ENCODE measurements at regions of chr2 and their contacts with region 1.

Region 1: GRCh38 chr2:39059366-39059952 is 61.4 kb downstream of the SOS1 start:
- DNase-seq: no peak
- ATAC-seq: no peak

Region 2: DNA sequence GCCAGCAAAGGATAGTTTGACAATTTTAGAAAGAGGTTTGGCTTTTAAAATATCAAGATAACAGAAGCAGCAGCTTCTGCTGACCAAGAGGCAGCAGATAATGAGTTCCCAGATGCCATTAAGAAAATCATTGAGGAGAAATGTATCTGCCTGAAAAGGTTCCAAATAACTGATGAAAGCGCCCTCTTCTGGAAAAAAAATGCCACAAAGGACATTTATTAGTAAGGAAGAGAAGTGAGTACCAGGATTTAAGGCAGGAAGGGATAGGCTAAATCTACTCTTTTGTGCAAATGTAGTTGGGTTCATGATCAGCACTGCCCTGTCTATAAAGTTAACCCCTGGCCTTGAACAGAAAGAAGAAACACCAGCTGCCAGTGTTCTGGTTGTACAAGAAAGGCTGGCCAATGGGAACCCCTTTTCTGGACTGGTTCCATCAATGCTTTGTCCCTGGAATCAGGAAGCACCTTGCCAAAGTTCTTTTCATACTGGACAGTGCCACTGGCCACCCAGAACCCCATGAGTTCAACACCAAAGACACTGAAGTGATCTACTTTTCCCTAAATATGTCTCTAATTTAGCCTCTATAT is 224.4 kb before region 1 on chr2:
- intact Hi-C with region 1: no loop called
- DNase-seq: no peak
- ATAC-seq: no peak

Region 3: DNA sequence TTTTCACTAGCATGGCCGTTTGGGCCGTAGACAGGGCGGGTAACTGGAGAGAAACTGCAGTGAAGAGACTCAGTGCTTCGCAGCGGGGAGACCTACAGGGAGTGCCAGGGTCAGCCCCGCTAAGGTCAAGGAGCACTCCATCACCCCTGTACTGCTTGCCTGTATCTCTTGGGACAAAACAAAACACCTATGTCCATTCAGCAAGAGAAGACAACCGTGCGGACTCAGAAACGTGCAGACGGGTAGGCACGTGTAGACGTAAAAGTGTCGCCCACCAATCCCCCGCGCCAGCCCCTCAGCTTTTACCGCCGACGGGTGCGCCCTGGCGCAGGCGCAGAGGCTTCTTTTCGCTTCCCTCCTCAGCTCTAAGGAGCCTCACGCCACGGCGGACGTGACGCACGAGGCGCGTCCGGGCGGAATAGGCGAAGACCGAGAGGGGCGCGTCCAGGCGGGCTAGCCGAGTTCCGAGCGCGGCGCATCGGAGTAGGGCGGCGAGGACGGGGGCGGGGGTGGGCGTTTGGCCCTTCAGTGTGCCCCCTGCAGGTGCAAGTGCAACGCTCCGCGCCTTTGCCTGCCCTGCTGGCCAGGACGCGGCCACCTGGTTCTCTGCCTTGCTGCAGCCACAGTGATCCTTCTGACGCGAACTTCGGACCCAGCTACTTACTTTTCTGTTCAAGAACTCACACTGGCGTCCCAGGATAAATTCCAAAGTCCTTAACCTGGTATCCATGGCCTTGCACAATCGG is 64.7 kb after region 1 on chr2:
- intact Hi-C with region 1: loop called (anchors 5 kb)
- DNase-seq: peak; percentile 98
- ATAC-seq: peak; percentile 92

Region 4: DNA sequence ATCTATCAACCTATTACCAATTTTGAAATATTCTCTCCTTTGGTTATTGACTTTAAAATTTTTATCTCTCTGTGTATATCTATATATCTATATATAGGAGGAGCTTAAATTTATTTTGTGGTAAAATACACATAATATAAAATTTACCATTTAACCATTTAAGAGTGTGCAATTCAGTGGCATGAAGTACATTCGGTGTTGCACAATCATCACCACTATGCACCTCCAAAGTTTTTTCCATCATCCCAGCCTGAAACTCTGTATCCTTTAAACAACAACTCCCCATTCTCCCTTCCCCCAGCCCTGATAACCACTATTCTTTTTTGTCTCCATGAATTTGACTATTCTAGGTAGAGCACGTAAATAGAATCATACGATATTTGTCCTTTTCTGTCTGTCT is 135.2 kb after region 1 on chr2:
- intact Hi-C with region 1: no loop called
- DNase-seq: no peak
- ATAC-seq: no peak